Aorta (tissue), 5 donors: ENCODE measurements at regions of chr12 and their contacts with region 1.

Region 1: GRCh38 chr12:30643366-30643765 is 52.3 kb downstream of the IPO8 start:
- DNase-seq: no peak
- ATAC-seq: no peak
- H3K4me3 ChIP-seq: no peak overlapping the region
- H3K27ac ChIP-seq: no peak overlapping the region
- H3K4me1 ChIP-seq: no peaks in the 10 kb centered on the region
- H3K27me3 ChIP-seq: no peaks in the 10 kb centered on the region

Region 2: DNA sequence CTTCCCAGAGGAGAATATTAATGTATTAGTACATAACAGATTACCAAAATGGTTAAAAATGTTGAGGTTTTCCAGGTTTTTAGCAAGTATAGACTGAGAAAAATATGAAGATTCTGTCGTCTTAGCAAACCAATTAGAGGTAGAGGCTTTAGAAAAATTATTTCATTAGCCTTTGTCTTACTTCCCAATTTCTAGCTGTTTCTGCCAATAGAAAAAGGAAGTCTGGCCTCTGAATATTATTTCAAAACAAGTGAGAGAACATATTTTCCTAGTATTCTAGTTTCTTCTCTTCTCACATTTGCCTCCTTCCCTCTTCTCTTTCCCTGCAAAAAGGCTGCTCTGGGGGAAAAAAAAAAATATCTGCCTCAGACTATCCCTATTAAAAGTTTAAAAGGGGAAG is 35.9 kb after region 1 on chr12:
- intact Hi-C with region 1: loop called in 1 of 2 experiments (anchors 5 kb)
- DNase-seq: no peak
- ATAC-seq: no peak
- H3K4me3 ChIP-seq: no peak overlapping the region
- H3K27ac ChIP-seq: no peak overlapping the region
- H3K4me1 ChIP-seq: no peaks in the 10 kb centered on the region
- H3K27me3 ChIP-seq: no peaks in the 10 kb centered on the region